Endothelial cell of umbilical vein (primary cell): ENCODE measurements at regions of chr2 and their contacts with region 1.

Region 1: DNA sequence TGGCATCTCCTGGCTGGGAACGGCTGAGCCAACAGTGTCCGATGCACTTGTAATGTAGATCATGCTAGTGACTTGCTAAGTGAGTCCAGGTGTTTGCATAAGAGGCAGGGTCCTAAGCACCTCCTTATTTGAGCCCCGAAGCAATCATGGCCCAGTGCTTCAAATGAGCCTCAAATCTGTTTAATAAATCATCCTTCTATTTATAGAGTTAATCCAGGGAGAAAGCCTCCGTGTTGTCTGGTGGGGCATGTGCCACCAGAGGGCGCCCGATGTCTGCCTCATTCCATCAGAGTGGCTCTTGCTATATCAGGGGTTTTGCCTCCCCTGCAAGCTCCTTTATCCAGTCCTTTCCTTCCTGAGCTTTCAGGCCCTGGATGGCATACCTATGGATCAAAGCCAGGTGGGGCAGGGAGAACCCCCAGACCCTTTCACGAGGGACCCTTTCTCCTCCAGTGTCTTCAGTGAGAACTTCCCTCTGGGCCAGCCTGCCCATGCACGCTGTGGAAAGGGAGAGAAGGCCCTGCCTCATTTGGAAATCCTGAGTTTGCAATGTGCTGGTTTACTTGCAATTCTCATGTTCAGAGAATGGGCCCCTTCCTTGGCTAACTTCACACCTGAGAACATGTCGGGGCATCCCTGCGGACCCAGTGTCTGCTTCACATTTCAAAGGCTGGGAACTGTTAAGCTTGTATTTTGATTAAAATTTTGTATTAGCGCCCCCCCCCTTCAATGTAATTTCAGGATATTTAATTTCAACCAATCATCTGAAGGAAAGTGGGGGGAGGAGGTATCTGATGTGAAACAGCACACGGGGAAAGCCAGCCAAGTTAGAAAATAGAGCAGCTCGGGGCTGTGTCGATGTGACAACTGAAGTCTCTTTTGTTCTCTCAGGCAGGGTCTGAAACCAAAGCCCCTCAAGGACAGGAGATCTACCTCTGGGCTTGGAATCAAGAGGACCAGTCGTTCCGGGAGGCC is 39.7 kb downstream of the RDH14 start:
- DNase-seq: peak; percentile 78
- H3K4me3 ChIP-seq: no peak overlapping the region
- H3K27ac ChIP-seq: no peak overlapping the region
- H3K4me1 ChIP-seq: no peaks in the 10 kb centered on the region
- H3K27me3 ChIP-seq: no peaks in the 10 kb centered on the region
- CTCF ChIP-seq: peak; percentile 84 to 89
- POLR2A ChIP-seq: no peak

Region 2: DNA sequence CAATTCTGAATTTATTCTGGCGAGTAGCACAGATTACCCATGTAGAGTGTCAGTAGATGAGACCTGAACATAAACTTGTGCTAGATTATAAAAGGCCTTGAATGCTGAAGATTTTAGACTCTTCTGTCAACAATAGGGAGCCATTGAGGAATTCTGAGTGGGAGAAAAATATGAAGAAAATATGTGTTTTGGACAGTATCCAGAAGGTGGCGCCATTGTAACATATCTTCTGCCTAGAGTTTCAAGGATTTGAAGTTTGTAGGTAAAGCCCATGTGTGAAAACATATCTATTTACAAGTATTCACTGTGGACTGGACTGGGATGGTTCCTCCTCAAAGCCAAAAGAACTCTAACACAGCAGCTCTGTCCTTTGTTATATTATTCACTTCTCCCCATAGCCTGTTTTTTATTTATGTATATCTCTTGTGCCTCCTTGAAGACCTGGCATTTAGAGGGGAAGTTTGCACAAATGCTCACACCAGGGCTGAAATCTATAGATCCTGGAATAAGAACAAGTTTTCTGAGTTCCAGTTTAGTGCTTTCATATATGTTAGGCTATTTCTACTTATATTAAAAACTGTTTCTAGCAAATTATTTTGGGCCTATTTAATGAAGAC is 85.2 kb before region 1 on chr2:
- CTCF ChIA-PET with region 1: interaction called, 5 read pairs
- POLR2A ChIA-PET with region 1: no interaction called
- dilution Hi-C with region 1: no loop called
- intact Hi-C with region 1: loop called (anchors 5 kb)
- DNase-seq: peak; percentile 75
- H3K4me3 ChIP-seq: no peak overlapping the region
- H3K27ac ChIP-seq: no peak overlapping the region
- H3K4me1 ChIP-seq: peaks cover 5% of the 10 kb centered on the region
- H3K27me3 ChIP-seq: no peaks in the 10 kb centered on the region
- CTCF ChIP-seq: peak; percentile 39 to 51
- POLR2A ChIP-seq: no peak

Region 3: DNA sequence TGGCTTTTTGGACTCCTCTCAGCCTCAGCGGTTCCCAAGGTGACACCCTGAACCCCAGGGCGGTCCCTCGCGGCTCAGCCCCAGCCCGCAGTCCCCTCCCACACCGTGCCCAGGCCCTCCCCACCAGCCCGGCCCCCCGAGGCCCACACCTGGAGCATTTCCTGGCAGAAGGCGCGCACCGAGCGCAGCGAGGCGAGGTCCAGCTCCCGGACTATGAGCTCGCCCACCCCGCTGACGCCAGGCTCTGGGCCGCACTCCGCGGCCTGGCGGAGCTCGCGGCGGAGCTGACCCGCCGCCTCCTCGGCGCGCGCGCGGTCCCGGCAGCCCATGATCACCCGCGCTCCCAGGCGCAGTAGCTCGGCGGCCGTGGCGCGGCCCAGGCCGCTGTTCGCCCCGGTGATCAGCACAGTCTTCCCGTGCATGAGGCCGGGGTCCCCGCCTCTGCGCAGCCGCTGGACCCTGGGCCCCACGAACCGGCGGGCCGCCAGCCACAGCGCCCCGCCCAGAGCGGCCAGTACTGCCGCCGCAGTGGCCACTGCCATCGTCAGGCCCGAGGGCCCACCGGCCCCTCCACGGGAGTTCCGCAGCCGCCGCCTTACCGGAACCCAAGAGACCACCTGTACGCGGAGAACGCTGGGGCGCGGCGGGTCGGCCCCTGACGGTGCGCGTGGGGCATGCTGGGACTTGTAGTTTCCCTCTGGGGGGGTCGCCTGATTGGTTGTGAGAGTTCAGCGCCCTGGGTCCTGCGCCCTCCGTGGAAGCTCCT is 39.5 kb after region 1 on chr2 and contains the start of gene RDH14:
- CTCF ChIA-PET with region 1: interaction called, 20 read pairs
- POLR2A ChIA-PET with region 1: interaction called, 3 read pairs
- dilution Hi-C with region 1: no loop called
- intact Hi-C with region 1: no loop called
- DNase-seq: peak; percentile 89
- H3K4me3 ChIP-seq: peak within 1 kb of the TSS; percentile 41 to 95 (median 46)
- H3K27ac ChIP-seq: peak within 1 kb of the TSS; percentile 58
- H3K4me1 ChIP-seq: peaks cover 19% of the 10 kb centered on the region
- H3K27me3 ChIP-seq: no peaks in the 10 kb centered on the region
- CTCF ChIP-seq: no peak
- POLR2A ChIP-seq: peak; percentile 51
- total RNA-seq, gene RDH14: 12.4 and 14.7 TPM in 2 replicates

Region 4: GRCh38 chr2:18824261-18824790 is 303.6 kb after region 1 on chr2:
- CTCF ChIA-PET with region 1: interaction called, 25 read pairs
- POLR2A ChIA-PET with region 1: no interaction called
- dilution Hi-C with region 1: no loop called
- intact Hi-C with region 1: no loop called
- DNase-seq: no peak
- H3K4me3 ChIP-seq: no peak overlapping the region
- H3K27ac ChIP-seq: no peak overlapping the region
- H3K4me1 ChIP-seq: no peaks in the 10 kb centered on the region
- H3K27me3 ChIP-seq: no peaks in the 10 kb centered on the region
- CTCF ChIP-seq: no peak
- POLR2A ChIP-seq: no peak

Region 5: DNA sequence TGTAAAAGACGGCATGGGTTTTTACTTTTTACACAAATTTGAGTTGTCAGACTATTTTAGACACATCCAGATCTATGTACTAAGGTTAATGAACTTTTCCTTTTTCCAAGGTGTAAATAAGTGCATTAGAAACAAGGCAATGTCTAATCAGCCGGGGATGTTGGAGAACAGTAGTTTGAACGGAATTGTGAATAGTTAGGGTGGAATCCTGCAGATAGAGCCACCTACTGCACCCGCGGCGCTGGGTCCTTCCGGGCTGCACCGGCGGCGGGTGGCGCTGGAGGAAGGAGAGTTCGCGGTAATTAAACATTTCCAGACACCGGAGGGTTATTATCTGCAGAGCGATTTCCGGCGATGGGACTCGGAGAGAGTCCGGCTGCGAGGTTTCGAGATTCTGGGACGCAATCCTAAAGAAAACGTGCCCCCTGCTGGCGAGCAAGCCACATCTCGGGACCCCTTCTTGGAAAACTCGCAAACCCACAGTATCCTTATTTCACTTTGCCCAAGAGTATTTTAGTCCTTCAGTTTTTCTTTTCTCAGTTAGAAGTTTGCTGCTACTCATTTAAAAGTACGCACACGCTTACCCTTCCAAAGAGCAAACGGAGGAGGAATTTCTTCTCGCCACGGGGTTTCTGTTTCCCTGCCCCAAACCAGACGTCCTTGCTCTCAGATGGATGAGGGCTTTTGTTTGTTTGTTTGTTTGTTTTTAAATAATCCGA is 842.2 kb after region 1 on chr2:
- CTCF ChIA-PET with region 1: interaction called, 16 read pairs
- POLR2A ChIA-PET with region 1: no interaction called
- dilution Hi-C with region 1: no loop called
- intact Hi-C with region 1: loop called (anchors 1 kb)
- DNase-seq: peak; percentile 67
- H3K4me3 ChIP-seq: peak overlapping the region; percentile 22 to 88 (median 48)
- H3K27ac ChIP-seq: no peak overlapping the region
- H3K4me1 ChIP-seq: peaks cover 18% of the 10 kb centered on the region
- H3K27me3 ChIP-seq: peaks cover 72 to 75% of the 10 kb centered on the region in 2 experiments
- CTCF ChIP-seq: peak; percentile 84 to 88
- POLR2A ChIP-seq: no peak